ENCODE measurements at regions of chr12 and their contacts with region 1.

Region 1: DNA sequence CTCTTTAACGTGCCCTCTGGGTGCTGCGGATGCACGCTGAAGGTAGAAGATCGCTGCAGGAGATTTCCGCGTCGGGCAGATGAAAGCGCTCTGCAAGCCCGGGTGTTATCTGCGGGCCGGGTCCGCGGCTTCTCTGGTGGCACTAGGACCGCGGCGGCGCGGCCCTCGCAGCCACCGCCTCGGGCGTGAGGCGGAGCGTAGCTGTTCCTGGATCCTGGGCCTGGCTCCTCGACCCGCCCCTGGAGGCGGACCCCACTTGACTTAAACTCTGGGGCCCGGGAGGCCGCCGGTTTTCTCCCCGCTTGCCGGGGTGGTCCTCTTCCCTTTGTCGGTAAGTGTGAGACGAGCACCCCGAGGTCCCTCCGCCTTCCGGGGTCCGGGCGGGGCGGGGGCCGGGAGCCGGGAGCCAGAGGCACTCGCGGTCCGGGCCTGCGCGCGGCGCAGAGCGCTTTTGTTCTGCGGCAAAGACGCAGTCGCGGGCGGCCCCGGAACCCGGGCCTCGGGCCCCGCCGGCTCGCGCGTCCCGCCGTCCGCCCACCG is at the start of gene RESF1:
- DNase-seq: peak; percentile 83
- H3K4me3 ChIP-seq: peak within 1 kb of the TSS; percentile 74 to 95 (median 84)
- H3K27ac ChIP-seq: peak within 1 kb of the TSS; percentile 67
- H3K4me1 ChIP-seq: peaks cover 12% of the 10 kb centered on the region
- H3K27me3 ChIP-seq: no peaks in the 10 kb centered on the region
- CTCF ChIP-seq: no peak
- total RNA-seq, gene RESF1: 21.0 to 21.3 TPM

Region 2: DNA sequence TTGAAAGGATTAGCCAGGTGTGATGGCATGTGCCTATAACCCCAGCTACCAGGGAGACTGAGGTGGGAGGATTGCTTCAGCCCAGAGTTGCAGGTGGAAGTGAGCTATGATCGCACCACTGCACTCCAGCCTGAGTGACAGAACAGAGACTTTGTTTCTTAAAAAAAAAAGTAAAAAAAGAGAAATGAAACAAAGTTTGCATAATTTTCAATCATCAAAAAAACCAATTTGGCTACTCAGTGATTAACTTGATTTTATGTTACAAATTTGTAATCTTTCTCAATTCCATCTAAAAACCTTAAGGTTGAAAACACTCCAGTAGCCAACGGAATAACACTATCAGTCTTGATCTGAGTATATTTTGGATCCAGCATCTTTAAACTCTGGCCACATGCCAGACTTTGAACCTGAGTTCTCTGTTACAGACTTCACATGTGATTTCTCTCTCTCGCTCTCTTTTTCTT is 355.7 kb before region 1 on chr12:
- CTCF ChIA-PET with region 1: no interaction called
- dilution Hi-C with region 1: no loop called
- in situ Hi-C with region 1: no loop called
- intact Hi-C with region 1: no loop called
- DNase-seq: no peak
- H3K4me3 ChIP-seq: no peak overlapping the region
- H3K27ac ChIP-seq: no peak overlapping the region
- H3K4me1 ChIP-seq: no peaks in the 10 kb centered on the region
- H3K27me3 ChIP-seq: no peaks in the 10 kb centered on the region
- CTCF ChIP-seq: no peak

Region 3: DNA sequence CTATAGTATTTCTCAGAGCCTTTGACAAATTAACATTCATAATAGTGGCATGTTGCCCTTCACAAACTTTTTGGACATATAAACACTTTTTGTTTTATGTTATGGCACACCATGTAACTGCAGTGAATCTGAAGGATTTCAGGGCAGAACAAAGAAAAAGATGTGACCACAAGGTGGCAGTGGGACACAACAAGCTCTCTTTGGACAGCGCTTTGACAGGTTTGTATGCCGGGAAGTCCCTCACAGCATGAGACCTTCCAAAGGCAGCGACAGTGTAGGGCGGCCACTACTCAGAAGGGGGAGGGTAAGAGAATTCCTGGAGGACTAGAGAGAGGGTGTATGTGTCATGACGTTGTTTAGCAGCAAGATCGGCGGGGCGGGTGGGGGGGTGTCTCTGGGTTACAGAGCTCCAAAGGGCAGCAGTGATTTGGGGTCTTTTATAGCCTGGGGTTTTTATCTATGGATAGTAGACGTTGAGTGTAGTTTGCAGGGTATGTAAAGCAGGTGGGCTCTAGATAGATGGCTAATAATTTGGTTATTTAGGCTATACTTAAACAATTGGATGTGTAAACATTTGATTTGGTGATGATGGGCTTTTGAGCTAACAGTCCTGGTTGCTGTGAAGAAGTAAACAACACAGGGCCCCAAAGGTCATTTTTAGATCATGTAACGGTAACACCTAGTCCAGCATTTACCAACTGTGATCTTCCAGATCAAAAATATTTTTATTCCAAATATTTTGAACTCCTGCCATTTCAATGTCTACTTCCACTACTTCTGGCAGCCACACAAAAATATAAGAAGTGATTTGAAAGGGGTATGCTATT is 276.9 kb before region 1 on chr12:
- CTCF ChIA-PET with region 1: no interaction called
- dilution Hi-C with region 1: no loop called
- in situ Hi-C with region 1: no loop called
- intact Hi-C with region 1: loop called (anchors 5 kb)
- DNase-seq: peak; percentile 73
- H3K4me3 ChIP-seq: no peak overlapping the region
- H3K27ac ChIP-seq: no peak overlapping the region
- H3K4me1 ChIP-seq: no peaks in the 10 kb centered on the region
- H3K27me3 ChIP-seq: no peaks in the 10 kb centered on the region
- CTCF ChIP-seq: peak; percentile 75 to 80

Region 4: DNA sequence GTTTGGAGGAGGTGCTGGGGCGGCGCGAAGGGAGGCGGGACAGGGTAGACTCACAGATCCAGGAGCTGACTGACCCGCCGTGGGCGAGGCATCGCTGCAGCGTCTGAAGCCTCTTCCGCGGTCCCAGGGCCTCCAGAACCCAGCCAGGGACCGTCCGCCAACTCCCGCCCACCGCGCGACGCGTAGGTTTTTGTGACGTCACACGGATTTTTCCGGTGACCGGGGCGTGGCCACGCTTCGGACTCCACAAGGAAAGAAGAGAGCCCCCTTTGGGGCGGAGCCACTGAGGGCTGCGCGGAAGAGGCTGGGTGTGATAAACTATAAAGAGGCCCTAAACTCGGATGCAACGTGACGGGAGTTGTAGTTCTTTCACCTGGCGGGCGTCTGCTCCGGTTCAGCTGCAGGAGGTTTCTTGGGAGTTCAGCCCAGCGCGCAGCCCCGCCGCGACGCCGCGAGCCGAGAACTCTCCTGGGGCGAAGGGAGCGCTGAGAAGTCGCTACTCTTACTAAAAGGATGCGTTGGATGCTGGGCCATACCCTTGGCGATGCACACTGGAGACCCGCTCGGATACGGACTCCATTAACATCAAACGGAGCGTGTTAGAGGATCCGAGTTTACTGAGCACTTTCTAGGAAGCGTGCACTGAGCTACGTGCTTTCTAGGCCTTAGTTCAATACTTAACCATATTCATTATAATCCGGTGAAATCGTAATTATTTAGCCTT is 230.2 kb before region 1 on chr12 and contains the start of gene AMN1:
- CTCF ChIA-PET with region 1: no interaction called
- dilution Hi-C with region 1: no loop called
- in situ Hi-C with region 1: no loop called
- intact Hi-C with region 1: loop called (anchors 1 kb)
- DNase-seq: peak; percentile 100
- H3K4me3 ChIP-seq: peak within 1 kb of the TSS; percentile 60 to 71 (median 62)
- H3K27ac ChIP-seq: peak within 1 kb of the TSS; percentile 82
- H3K4me1 ChIP-seq: peaks cover 20% of the 10 kb centered on the region
- H3K27me3 ChIP-seq: no peaks in the 10 kb centered on the region
- CTCF ChIP-seq: no peak
- total RNA-seq, gene AMN1: 5.0 to 5.7 TPM

Region 5: DNA sequence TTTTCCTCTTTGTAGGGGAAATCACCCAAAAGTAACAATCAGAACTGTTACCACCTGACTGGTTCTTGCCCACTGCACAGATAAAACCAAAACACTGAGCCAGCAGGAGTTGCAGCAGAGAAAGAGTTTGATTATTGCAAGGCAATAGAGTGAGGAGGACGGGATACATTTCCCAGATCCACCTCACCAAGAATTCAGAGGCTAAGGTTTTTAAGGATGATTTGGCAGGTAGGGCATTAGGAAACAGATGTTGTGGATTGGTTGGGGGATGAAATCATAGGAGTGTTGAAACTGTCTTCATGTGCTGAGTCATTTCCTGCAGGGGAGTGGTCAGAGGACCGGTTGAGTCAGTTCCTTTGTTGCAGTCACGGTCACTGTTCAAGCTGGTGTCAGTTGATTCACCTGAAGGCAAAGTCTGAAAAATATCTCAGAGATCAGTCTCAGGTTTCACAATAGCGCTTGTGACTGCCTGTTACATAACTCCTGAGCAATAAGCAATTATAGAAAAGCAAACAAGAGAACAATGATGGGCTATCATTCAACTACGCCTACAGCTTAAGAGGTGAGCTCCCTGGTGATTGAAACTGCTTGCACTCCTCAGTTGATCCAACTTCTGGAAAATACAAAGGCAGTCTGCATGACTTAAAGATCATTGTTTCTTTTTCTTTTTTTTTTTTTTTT is 210.1 kb before region 1 on chr12:
- CTCF ChIA-PET with region 1: no interaction called
- dilution Hi-C with region 1: no loop called
- in situ Hi-C with region 1: no loop called
- intact Hi-C with region 1: loop called (anchors 5 kb)
- DNase-seq: peak; percentile 100
- H3K4me3 ChIP-seq: no peak overlapping the region
- H3K27ac ChIP-seq: peak overlapping the region; percentile 91
- H3K4me1 ChIP-seq: peaks cover 15% of the 10 kb centered on the region
- H3K27me3 ChIP-seq: no peaks in the 10 kb centered on the region
- CTCF ChIP-seq: no peak

Region 6: DNA sequence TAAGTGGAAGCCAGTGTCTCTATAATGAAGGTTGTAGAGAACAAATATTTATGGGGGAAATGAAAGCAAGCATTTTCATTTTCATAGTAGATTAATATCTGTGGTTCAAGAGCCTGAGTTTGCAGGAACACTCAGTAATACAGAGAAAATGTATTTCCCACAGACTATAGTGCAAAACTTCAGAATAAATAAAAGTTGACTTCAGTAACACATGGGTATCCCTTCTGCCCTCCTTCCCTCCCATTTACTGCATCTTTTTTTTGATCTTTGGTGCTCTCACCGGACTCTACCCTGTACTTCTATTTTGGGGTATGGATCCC is 155.1 kb before region 1 on chr12:
- CTCF ChIA-PET with region 1: no interaction called
- dilution Hi-C with region 1: no loop called
- in situ Hi-C with region 1: no loop called
- intact Hi-C with region 1: no loop called
- DNase-seq: no peak
- H3K4me3 ChIP-seq: no peak overlapping the region
- H3K27ac ChIP-seq: no peak overlapping the region
- H3K4me1 ChIP-seq: no peaks in the 10 kb centered on the region
- H3K27me3 ChIP-seq: no peaks in the 10 kb centered on the region
- CTCF ChIP-seq: no peak

Region 7: GRCh38 chr12:32312049-32312670 is 352.9 kb after region 1 on chr12:
- CTCF ChIA-PET with region 1: interaction called, 3 read pairs
- dilution Hi-C with region 1: no loop called
- in situ Hi-C with region 1: no loop called
- intact Hi-C with region 1: loop called (anchors 5 kb)
- DNase-seq: peak; percentile 45
- H3K4me3 ChIP-seq: no peak overlapping the region
- H3K27ac ChIP-seq: peak overlapping the region; percentile 8
- H3K4me1 ChIP-seq: no peaks in the 10 kb centered on the region
- H3K27me3 ChIP-seq: no peaks in the 10 kb centered on the region
- CTCF ChIP-seq: peak; percentile 29 to 55

Measured in mammary epithelial cell (primary cell).